ENCODE measurements at regions of chr6 and their contacts with region 1.

Region 1: DNA sequence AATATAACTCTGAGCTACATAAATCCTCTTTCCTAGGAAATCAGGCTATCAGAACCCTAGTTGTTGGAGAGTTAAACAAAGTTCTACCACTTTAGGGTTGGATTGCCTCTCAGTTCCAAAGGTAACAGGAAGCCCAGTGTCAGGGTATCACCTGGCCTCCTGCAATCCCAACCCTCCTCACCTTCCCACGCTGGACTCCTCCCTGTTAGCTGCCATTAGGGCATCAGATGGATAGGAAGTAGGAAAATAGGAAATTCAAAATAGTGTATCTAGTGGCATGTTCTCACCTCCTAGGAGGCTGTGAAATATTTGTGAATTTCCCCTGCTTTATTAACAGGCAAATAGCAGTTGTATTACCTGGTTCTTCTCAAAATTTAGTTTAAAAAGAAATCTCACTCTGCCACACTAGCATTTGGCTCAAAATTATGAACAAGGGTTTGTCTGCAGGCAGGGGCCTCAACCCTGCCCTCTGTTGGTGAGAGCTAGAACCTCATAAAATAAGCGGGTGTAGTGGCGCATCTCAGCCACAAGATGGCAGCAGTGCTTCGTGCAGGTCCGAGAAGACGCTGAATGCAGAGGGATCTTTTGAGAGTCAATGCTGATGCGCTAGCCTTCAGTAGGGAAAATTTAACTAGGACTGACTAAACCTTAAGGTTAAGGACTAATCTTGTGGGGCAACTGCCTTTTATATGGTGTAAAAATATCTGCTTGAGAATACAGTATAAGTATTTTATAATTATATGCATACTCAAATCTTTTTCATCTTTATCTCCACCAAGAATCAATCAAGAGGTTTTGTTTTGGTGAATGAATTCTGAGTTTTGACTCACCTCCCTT is 209.8 kb upstream of the KCNQ5 start:
- DNase-seq: peak; percentile 69
- H3K4me3 ChIP-seq: no peak overlapping the region
- H3K27ac ChIP-seq: no peak overlapping the region
- H3K27me3 ChIP-seq: no peaks in the 10 kb centered on the region
- CTCF ChIP-seq: peak; percentile 100

Region 2: GRCh38 chr6:72348926-72349325 is 63.2 kb before region 1 on chr6:
- CTCF ChIA-PET with region 1: interaction called, 12 read pairs
- POLR2A ChIA-PET with region 1: no interaction called
- DNase-seq: no peak
- H3K4me3 ChIP-seq: no peak overlapping the region
- H3K27ac ChIP-seq: no peak overlapping the region
- H3K27me3 ChIP-seq: no peaks in the 10 kb centered on the region
- CTCF ChIP-seq: no peak

Region 3: DNA sequence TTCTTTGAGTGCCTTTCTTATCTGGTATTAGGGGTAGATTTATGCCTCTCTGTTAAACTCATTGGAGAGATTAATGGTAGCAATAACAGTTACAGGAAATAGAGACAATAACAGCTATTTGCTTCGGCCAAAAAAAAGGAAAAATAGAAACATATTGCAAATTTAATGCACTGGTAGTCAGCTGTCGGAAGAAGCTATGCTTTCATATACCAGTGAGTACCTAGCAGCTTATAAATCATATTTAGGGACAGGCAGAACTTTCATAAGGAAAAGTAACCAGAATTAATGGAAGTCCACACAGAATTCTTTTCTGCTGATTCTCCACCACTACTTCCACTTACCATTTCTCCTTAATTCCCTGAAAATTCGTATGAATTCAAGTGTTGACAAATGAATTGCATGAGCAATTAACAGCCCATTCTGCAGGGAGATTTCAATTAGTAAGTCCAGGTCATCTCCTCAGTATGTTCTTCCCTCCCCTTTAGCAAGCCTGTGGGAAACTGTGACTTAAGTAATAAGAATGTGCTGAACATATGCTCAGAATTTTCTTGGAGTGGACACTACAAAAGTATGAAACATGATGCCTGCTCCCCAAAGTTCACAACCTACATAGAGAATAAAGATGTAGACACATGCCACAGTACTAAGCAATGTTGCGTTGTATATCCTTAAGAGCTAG is 13.1 kb after region 1 on chr6:
- CTCF ChIA-PET with region 1: interaction called, 39 read pairs
- POLR2A ChIA-PET with region 1: no interaction called
- DNase-seq: peak; percentile 74
- H3K4me3 ChIP-seq: no peak overlapping the region
- H3K27ac ChIP-seq: no peak overlapping the region
- H3K27me3 ChIP-seq: no peaks in the 10 kb centered on the region
- CTCF ChIP-seq: no peak

Region 4: GRCh38 chr6:72522719-72523141 is 110.6 kb after region 1 on chr6:
- CTCF ChIA-PET with region 1: no interaction called
- POLR2A ChIA-PET with region 1: no interaction called
- DNase-seq: no peak
- H3K4me3 ChIP-seq: no peak overlapping the region
- H3K27ac ChIP-seq: no peak overlapping the region
- H3K27me3 ChIP-seq: no peaks in the 10 kb centered on the region
- CTCF ChIP-seq: no peak

Region 5: GRCh38 chr6:72622094-72622940 is 210.2 kb after region 1 on chr6:
- CTCF ChIA-PET with region 1: interaction called, 92 read pairs
- POLR2A ChIA-PET with region 1: no interaction called
- DNase-seq: no peak
- H3K4me3 ChIP-seq: peak overlapping the region; percentile 67
- H3K27ac ChIP-seq: no peak overlapping the region
- H3K27me3 ChIP-seq: no peaks in the 10 kb centered on the region
- CTCF ChIP-seq: 0 out of 2 replicates have a peak, but pooled peaks have one; percentile 16

Region 6: GRCh38 chr6:73180763-73181619 is 768.9 kb after region 1 on chr6:
- CTCF ChIA-PET with region 1: interaction called, 15 read pairs
- POLR2A ChIA-PET with region 1: no interaction called
- DNase-seq: peak; percentile 44
- H3K4me3 ChIP-seq: peak overlapping the region; percentile 51
- H3K27ac ChIP-seq: no peak overlapping the region
- H3K27me3 ChIP-seq: no peaks in the 10 kb centered on the region
- CTCF ChIP-seq: peak; percentile 94